ENCODE measurements at regions of chr1 and their contacts with region 1.

Region 1: DNA sequence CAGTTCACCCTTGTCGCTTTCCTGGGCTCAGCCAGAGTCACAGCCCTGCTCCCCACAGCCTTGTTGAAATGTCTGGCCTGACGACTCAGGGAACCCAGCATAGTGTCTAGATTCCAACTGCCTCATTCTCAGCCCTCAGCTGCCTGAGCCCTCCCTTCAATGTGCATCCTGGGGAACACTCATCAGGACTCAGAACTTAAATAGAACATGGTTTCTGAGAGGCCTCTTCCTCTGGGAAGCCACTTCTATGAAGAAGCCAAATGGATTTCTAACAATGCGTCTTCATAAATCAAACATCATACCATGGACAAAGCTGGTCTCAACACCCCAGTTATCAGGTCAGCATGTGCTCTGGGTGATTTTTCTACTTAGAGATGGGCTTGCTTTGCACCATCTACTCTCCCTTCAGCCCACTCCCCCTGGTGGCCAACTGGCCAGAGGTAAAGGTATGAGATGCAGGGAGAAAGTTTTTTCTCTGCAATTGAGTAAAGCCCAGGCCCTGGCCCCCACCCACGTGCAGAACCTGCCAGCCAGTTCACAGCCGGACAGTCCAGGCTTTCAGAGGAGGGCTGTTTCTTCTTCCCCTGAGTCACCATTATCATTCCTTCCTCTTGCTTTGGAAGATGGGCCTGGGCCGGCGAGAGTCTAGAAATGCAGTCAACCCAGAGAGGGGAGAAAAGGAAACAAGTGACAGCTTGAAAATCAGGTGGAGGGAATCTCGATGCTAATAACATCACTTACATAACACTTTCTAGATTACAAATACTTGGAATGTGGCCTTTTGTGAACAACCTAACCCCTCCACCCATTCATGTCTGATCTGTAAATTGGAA is 32.1 kb downstream of the CD244 start:
- DNase-seq: peak; percentile 48 to 64
- H3K4me3 ChIP-seq: no peak overlapping the region
- H3K27ac ChIP-seq: no peak overlapping the region
- H3K4me1 ChIP-seq: peaks cover 28% of the 10 kb centered on the region
- H3K27me3 ChIP-seq: no peaks in the 10 kb centered on the region
- CTCF ChIP-seq: peak; percentile 87

Region 2: GRCh38 chr1:160748181-160748877 is 82.2 kb before region 1 on chr1:
- CTCF ChIA-PET with region 1: no interaction called
- POLR2A ChIA-PET with region 1: interaction called, 5 read pairs
- intact Hi-C with region 1: loop called (anchors 1 kb)
- DNase-seq: peak; percentile 19 to 43
- H3K4me3 ChIP-seq: no peak overlapping the region
- H3K27ac ChIP-seq: no peak overlapping the region
- H3K4me1 ChIP-seq: peaks cover 22% of the 10 kb centered on the region
- H3K27me3 ChIP-seq: peaks cover 26% of the 10 kb centered on the region
- CTCF ChIP-seq: peak; percentile 40; the same call in 1 of the 2 replicates

Region 3: DNA sequence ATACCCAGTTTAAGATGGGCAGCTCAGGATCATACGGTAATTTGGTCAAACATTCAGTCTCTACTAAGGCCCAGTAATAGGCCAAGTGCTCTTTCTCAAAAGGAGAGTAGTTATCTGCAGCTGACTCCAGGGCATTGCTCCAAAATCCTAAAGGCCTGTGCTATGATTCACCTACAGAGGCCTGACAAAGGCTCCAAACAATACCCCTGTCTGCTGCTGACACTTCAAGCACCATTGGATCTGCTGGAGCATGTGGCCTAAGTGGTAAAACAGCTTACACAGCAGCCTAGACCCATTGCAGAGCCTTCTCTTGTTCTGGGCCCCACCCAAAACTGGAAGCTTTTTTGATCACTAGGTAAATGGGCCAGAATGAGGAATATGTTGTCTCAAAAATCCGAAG is 68.7 kb before region 1 on chr1:
- CTCF ChIA-PET with region 1: no interaction called
- POLR2A ChIA-PET with region 1: no interaction called
- intact Hi-C with region 1: no loop called
- DNase-seq: no peak
- H3K4me3 ChIP-seq: no peak overlapping the region
- H3K27ac ChIP-seq: no peak overlapping the region
- H3K4me1 ChIP-seq: no peaks in the 10 kb centered on the region
- H3K27me3 ChIP-seq: no peaks in the 10 kb centered on the region
- CTCF ChIP-seq: no peak

Region 4: GRCh38 chr1:160813215-160813614 is 17.3 kb before region 1 on chr1:
- CTCF ChIA-PET with region 1: no interaction called
- POLR2A ChIA-PET with region 1: no interaction called
- intact Hi-C with region 1: loop called (anchors 1 kb)
- DNase-seq: peak; percentile 50 to 89
- H3K4me3 ChIP-seq: no peak overlapping the region
- H3K27ac ChIP-seq: peak overlapping the region; percentile 65
- H3K4me1 ChIP-seq: peaks cover 24% of the 10 kb centered on the region
- H3K27me3 ChIP-seq: no peaks in the 10 kb centered on the region
- CTCF ChIP-seq: no peak

Region 5: DNA sequence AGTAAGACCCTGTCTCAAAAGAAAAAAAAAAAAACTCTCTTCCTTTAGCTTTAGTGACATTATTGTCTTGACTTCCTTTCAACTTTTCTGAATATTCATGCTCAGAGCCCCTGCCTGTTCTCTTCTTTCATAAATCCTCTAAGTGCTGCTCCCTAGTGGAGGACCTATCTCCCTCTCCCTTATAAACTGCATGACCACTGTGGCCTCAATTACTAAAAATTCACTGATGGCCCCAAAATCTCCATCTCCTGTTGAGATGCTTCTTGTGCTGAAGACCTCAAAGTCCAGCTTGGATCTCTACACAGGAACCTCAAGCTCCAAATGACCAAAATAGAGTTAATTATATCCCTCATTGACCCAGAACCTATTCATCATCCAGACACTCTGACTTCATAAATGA is 46.7 kb after region 1 on chr1:
- CTCF ChIA-PET with region 1: no interaction called
- POLR2A ChIA-PET with region 1: no interaction called
- intact Hi-C with region 1: no loop called
- DNase-seq: no peak
- H3K4me3 ChIP-seq: no peak overlapping the region
- H3K27ac ChIP-seq: no peak overlapping the region
- H3K4me1 ChIP-seq: no peaks in the 10 kb centered on the region
- H3K27me3 ChIP-seq: peaks cover 19% of the 10 kb centered on the region
- CTCF ChIP-seq: no peak

Measured in PC-9 (cell line).